ENCODE measurements at regions of chr9 and their contacts with region 1.

Region 1: DNA sequence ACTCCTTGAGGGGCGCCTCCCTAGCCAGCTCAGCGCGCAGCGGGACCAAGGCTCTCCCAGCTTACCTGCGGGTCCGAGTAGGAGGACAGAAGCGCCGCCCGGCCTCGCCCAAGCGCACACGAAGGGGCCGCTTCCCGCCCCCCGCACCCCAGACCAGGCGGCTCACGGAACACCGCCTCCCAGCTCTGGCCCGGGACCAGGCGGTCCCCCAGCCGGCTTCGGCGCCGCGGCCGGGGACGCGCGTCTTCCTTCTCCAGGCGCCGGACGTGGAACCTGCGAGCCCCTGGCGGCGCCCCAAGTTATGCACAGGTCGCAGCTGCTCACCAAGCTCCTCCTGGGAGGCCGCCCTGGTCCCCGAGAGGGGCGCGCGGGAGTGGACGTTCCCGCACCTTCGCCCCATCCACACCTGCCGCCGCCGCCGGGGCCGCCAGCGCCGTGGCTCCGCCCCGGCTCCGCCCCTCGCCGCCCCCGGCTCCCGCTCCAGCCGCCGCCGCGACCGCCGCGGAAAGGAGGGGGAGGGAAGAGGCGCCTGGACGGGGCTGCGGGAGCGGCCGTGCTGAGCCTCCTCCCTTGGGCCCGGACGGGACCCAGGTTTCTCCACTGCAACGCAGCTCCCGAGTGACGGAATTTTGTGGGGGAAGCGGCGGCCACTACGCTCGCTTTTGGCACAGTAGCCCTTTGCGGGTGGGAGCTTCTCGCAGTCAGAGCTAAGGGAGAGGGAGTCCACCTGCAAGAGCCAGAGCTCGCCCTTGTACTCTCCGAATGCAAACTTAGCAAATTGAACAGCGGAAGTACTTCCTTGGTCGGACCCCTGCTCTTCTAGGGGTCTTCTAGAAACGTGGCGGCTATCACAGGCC is 77.5 kb upstream of the IFNE start:
- H3K4me3 ChIP-seq: peak overlapping the region; percentile 98
- H3K27ac ChIP-seq: peak overlapping the region; percentile 91
- H3K4me1 ChIP-seq: peaks cover 12% of the 10 kb centered on the region; the same call in 1 of the 2 replicates
- CTCF ChIP-seq: peak; percentile 36; the same call in 1 of the 2 replicates

Region 2: GRCh38 chr9:21549251-21549765 is 10.3 kb before region 1 on chr9:
- CTCF ChIA-PET with region 1: no interaction called
- POLR2A ChIA-PET with region 1: interaction called, 11 read pairs
- H3K4me3 ChIP-seq: no peak overlapping the region; the same call in 1 of the 2 replicates
- H3K27ac ChIP-seq: peak overlapping the region; percentile 53
- H3K4me1 ChIP-seq: peaks cover 23% of the 10 kb centered on the region
- CTCF ChIP-seq: 0 out of 2 replicates have a peak, but pooled peaks have one; percentile 21

Region 3: GRCh38 chr9:21576331-21577189 is 16.9 kb after region 1 on chr9:
- CTCF ChIA-PET with region 1: interaction called, 6 read pairs
- POLR2A ChIA-PET with region 1: interaction called, 14 read pairs
- H3K4me3 ChIP-seq: peak overlapping the region; percentile 15
- H3K27ac ChIP-seq: peak overlapping the region; percentile 21
- H3K4me1 ChIP-seq: peaks cover 24% of the 10 kb centered on the region
- CTCF ChIP-seq: no peak

Region 4: DNA sequence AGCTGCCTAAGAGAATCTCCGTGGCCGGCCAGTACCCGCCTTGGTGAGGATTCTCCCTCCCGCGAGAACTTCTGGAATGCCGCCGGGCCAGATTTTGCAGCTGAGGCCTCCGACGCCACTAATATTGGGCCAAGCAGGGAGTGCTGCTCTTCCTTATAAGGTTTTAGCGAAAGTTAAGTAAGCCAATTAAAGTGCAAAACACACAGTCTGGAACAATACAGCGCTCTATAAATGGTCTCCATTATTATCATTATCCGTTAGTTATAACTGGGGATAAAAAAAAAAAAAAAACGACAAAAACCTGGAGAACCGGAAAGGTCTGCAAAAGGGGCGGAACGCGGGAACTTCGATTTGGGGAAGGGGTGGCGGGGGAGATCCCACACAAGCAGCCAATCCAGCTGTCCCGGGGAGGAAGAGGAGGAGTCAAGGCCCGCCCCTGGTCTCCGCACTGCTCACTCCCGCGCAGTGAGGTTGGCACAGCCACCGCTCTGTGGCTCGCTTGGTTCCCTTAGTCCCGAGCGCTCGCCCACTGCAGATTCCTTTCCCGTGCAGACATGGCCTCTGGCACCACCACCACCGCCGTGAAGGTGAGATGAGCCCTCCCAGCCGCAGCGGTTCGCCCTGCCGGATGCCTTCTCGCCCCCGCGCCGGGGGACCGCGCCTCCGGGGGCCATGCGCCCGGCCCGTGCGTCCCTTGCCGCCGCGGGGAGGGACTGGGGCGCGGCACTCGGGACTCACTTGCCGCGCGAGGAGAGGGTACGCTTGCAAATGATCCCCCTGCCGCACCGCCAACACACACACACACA is 242.7 kb after region 1 on chr9 and contains the start of gene MTAP:
- CTCF ChIA-PET with region 1: no interaction called
- POLR2A ChIA-PET with region 1: interaction called, 10 read pairs
- H3K4me3 ChIP-seq: peak within 1 kb of the TSS; percentile 82
- H3K27ac ChIP-seq: peak within 1 kb of the TSS; percentile 80
- H3K4me1 ChIP-seq: peaks cover 2% of the 10 kb centered on the region; the same call in 1 of the 2 replicates
- CTCF ChIP-seq: no peak